BJ (cell line): ENCODE measurements at regions of chr2 and their contacts with region 1.

Region 1: GRCh38 chr2:241558532-241559322 is at the start of gene BOK:
- DNase-seq: no peak
- H3K4me3 ChIP-seq: peak within 1 kb of the TSS; percentile 64
- H3K27me3 ChIP-seq: no peaks in the 10 kb centered on the region
- CTCF ChIP-seq: no peak
- polyA plus RNA-seq, gene BOK: 29.4 and 42.9 TPM in 2 replicates

Region 2: GRCh38 chr2:241613012-241613780 is 54.5 kb after region 1 on chr2:
- CTCF ChIA-PET with region 1: no interaction called
- POLR2A ChIA-PET with region 1: interaction called, 12 read pairs
- DNase-seq: no peak
- H3K4me3 ChIP-seq: no peak overlapping the region
- H3K27me3 ChIP-seq: no peaks in the 10 kb centered on the region
- CTCF ChIP-seq: no peak